Activated naive CD4-positive, alpha-beta T cell treated with anti-CD3 and anti-CD28 coated beads for 36 hours (primary cell): ENCODE measurements at regions of chr6 and their contacts with region 1.

Region 1: GRCh38 chr6:15776458-15776980 is 113.7 kb upstream of the DTNBP1 start:
- DNase-seq: peak; percentile 69
- H3K4me3 Mint-ChIP-seq: no peak overlapping the region
- H3K27ac Mint-ChIP-seq: peak overlapping the region; percentile 76
- H3K4me1 Mint-ChIP-seq: peaks cover 40% of the 10 kb centered on the region
- H3K27me3 Mint-ChIP-seq: peaks cover 4% of the 10 kb centered on the region

Region 2: DNA sequence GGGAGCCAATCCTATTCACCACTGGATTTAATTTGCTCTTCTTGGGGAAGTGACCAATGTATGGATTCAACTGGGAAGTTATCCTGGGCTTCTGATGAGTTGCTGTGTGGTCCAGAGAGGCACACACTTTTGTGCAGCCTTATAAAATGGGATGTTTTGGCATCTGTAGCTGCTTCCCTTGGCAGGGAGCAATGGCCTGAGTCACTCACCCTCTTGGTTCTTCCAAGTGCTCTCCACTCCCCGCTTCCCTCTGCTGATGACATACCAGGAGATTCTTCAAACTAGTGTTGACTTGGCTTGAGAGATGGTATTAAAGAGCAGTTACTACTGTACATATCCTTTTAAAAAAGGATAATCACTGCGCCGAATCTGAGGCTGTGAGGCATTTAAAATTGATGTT is 424.9 kb before region 1 on chr6:
- CTCF ChIA-PET with region 1: no interaction called
- intact Hi-C with region 1: no loop called
- DNase-seq: no peak
- H3K4me3 Mint-ChIP-seq: no peak overlapping the region
- H3K27ac Mint-ChIP-seq: no peak overlapping the region
- H3K4me1 Mint-ChIP-seq: peaks cover 76% of the 10 kb centered on the region
- H3K27me3 Mint-ChIP-seq: no peaks in the 10 kb centered on the region

Region 3: GRCh38 chr6:15691250-15691869 is 85.2 kb before region 1 on chr6:
- CTCF ChIA-PET with region 1: interaction called, 7 read pairs
- intact Hi-C with region 1: loop called (anchors 2 kb)
- DNase-seq: peak; percentile 87
- H3K4me3 Mint-ChIP-seq: no peak overlapping the region
- H3K27ac Mint-ChIP-seq: no peak overlapping the region
- H3K4me1 Mint-ChIP-seq: peaks cover 7% of the 10 kb centered on the region
- H3K27me3 Mint-ChIP-seq: peaks cover 5% of the 10 kb centered on the region

Region 4: DNA sequence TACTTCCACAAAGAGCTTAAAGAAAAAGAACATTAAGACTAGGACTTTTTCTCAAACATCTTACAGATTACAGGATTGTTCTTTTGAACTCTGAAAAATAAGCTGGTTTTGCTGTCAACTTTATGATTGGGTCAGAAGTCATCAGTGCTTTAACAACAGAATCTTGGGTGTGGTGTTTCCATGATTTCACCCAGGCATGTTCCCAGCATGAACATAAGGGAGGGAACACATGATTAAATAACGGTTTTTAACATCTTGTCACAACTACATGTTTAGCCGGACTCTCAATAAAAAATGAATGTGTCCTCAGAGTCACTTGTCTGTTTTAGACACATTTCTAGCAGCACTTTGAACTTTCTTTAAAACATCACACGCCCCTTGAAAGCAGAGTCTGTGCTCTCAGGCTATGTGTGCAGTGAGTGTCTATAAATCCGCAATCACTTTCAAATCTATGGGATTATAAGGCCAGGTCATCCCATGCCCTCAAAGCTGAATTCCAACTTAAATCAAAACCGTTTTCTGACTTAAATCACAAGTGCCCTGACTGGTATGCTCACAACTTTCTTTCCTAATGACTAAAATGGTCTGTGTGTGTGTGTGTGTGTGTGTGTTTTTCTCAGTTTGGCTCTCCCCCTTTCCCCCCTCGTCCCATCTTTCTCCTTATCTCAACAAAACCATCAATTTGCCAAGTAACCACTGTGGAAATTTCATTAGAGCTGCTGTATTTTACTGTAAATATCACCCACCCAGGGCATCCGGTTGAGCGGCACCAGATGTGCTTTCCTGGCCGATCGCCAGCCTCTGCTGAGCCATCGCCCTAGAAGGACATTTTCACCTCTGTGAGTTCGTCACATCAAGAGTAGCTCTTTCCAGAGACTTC is 103.1 kb after region 1 on chr6:
- CTCF ChIA-PET with region 1: no interaction called
- intact Hi-C with region 1: loop called (anchors 1 kb)
- DNase-seq: peak; percentile 84
- H3K4me3 Mint-ChIP-seq: peak overlapping the region; percentile 29
- H3K27ac Mint-ChIP-seq: peak overlapping the region; percentile 80
- H3K4me1 Mint-ChIP-seq: peaks cover 26% of the 10 kb centered on the region
- H3K27me3 Mint-ChIP-seq: no peaks in the 10 kb centered on the region

Region 5: DNA sequence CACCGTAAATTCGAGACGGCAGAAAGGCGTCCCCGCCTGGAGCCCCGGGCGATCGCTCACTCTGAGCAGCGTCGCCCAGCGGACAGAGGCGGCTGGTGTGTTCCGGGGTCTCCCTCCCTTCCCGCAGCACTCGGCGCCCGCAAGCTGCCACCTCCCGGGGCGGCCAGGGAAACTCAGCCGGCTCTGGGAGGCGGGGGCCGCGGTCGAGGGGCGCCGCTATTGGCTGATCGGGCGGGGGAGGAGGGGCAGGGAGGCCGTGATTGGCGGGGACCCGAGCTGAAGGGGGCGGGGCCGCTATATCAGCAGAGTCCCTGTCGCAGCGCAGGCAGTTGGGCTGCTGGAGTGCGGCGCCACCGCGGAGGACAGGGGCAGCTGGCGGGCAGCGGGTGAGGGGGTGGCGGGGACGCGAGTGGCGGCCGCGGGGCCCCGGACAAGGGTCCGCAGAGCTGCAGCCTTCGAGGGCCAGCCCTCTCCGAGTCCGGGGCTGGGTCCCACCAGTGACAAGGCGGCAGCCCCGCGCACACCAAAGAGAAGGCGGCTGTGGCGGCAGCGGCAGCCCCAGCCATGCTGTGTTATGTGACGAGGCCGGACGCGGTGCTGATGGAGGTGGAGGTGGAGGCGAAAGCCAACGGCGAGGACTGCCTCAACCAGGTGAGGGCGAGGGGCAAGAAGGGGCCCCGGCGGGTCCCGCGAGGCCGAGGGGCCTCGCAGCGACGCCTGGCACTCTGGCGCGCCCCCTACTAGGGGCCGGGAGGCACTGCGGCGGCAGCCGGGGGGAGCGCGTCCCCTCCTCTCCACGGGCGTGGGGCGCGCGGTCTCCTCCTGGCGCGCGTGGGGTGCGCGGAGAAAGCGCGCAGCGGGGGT is 352.5 kb after region 1 on chr6 and contains the start of gene MYLIP:
- CTCF ChIA-PET with region 1: interaction called, 3 read pairs
- intact Hi-C with region 1: loop called (anchors 1 kb)
- DNase-seq: peak; percentile 98
- H3K4me3 Mint-ChIP-seq: peak within 1 kb of the TSS; percentile 86
- H3K27ac Mint-ChIP-seq: peak within 1 kb of the TSS; percentile 92
- H3K4me1 Mint-ChIP-seq: peaks cover 30% of the 10 kb centered on the region
- H3K27me3 Mint-ChIP-seq: peaks cover 7% of the 10 kb centered on the region
- total RNA-seq, gene MYLIP: 7.3 to 8.1 TPM

Region 6: GRCh38 chr6:16471222-16471909 is 694.8 kb after region 1 on chr6:
- CTCF ChIA-PET with region 1: no interaction called
- intact Hi-C with region 1: loop called (anchors 1 kb)
- DNase-seq: no peak
- H3K4me3 Mint-ChIP-seq: no peak overlapping the region
- H3K27ac Mint-ChIP-seq: peak overlapping the region; percentile 68
- H3K4me1 Mint-ChIP-seq: peaks cover 60% of the 10 kb centered on the region
- H3K27me3 Mint-ChIP-seq: no peaks in the 10 kb centered on the region